ENCODE measurements at regions of chrX and their contacts with region 1.

Region 1: DNA sequence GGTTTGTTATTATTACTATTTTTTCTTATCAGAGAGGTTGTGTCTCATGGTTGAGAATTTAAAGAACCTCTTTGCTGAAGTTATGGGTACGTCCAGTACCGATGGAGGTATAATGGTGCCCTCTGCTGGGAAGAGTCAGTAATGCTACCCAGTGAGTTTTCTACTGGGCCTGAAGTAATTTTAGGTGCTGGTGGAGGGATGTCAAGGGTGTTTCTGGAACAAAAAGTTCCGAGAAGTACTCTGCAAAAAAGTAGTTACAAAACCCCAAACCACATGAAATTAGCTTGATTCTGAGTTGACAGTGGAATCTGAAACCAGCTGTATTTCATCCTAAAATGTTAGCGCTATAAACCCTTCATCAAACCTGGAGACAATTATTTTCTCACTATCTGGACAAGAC is 102.5 kb upstream of the MID1 start:
- DNase-seq: peak; percentile 60
- H3K4me3 ChIP-seq: no peak overlapping the region
- H3K27ac ChIP-seq: no peak overlapping the region
- H3K4me1 ChIP-seq: no peaks in the 10 kb centered on the region
- H3K27me3 ChIP-seq: no peaks in the 10 kb centered on the region
- CTCF ChIP-seq: peak; percentile 85

Region 2: DNA sequence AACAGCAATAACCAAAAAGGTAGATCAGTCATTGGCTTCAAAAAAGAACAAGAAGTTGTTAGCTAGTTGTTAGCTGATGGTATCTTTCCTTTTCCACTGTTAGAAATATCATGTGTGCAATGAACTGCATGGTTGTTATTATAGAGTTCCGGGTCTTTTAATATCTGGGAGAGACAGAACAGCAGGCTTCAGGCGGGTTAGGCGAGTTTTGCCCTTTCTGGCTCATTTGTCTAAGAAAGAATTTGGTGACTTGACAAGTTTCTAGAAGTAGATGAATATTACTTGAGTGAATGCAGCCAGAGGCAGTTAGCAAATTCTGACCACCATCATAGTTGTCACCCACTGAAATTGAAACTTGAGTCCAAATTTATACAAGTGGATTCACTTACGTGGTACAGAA is 13.6 kb before region 1 on chrX:
- CTCF ChIA-PET with region 1: no interaction called
- POLR2A ChIA-PET with region 1: no interaction called
- intact Hi-C with region 1: no loop called
- DNase-seq: no peak
- H3K4me3 ChIP-seq: no peak overlapping the region
- H3K27ac ChIP-seq: no peak overlapping the region
- H3K4me1 ChIP-seq: no peaks in the 10 kb centered on the region
- H3K27me3 ChIP-seq: no peaks in the 10 kb centered on the region
- CTCF ChIP-seq: no peak

Region 3: GRCh38 chrX:11100281-11101035 is 377.6 kb after region 1 on chrX:
- CTCF ChIA-PET with region 1: interaction called, 3 read pairs
- POLR2A ChIA-PET with region 1: no interaction called
- intact Hi-C with region 1: loop called (anchors 5 kb)
- DNase-seq: peak; percentile 55
- H3K4me3 ChIP-seq: no peak overlapping the region
- H3K27ac ChIP-seq: no peak overlapping the region
- H3K4me1 ChIP-seq: no peaks in the 10 kb centered on the region
- H3K27me3 ChIP-seq: no peaks in the 10 kb centered on the region
- CTCF ChIP-seq: peak; percentile 57

Region 4: DNA sequence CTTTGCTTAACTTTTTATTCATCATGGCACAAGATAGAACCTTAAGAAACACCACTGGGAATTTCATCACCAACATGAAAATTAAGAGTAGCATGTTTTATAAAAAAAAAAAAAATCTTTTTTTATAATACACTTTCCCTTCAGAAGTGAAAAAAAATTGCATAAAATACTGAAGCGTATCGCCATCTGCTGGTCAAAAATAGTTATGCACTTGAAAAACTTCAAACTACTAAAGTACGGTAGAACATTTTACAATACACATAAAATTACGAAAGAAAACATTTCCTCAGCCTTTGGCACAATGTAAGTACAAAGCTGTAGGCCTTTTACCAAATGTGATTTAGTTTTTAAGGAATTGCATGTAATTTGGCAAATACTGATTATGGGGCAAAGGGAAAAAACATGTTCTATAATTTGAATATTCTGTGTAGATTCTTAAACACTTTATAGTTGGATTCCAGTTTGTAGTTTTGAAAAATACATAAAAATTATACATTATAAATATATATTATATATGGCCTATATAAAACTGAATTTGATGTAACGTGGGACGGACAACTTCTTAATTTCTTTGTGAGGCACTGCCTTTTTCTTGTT is 414.8 kb after region 1 on chrX:
- CTCF ChIA-PET with region 1: no interaction called
- POLR2A ChIA-PET with region 1: no interaction called
- intact Hi-C with region 1: loop called (anchors 10 kb)
- DNase-seq: peak; percentile 49
- H3K4me3 ChIP-seq: no peak overlapping the region
- H3K27ac ChIP-seq: no peak overlapping the region
- H3K4me1 ChIP-seq: no peaks in the 10 kb centered on the region
- H3K27me3 ChIP-seq: no peaks in the 10 kb centered on the region
- CTCF ChIP-seq: peak; percentile 79

Measured in A673 (cell line).